Activated T-helper 2 cell treated with anti-CD3 and anti-CD28 coated beads, Interferon-gamma antibody, Interleukin-2, Interleukin-4, amounts not matched to agents 10 μg/mL and 5 μg/mL and 100 μg/mL, durations not matched to agents 14 hours and 24 hours and 36 hours (primary cell): ENCODE measurements at regions of chr16 and their contacts with region 1.

Region 1: GRCh38 chr16:46789499-46790414 is 41.2 kb downstream of the C16orf87 start:
- DNase-seq: peak; percentile 77
- H3K4me3 Mint-ChIP-seq: peak overlapping the region; percentile 80
- H3K27ac Mint-ChIP-seq: peak overlapping the region; percentile 52
- H3K4me1 Mint-ChIP-seq: peaks cover 22% of the 10 kb centered on the region
- H3K27me3 Mint-ChIP-seq: no peaks in the 10 kb centered on the region

Region 2: GRCh38 chr16:46801428-46802049 is 11.8 kb after region 1 on chr16:
- intact Hi-C with region 1: loop called (anchors 1 kb)
- DNase-seq: no peak
- H3K4me3 Mint-ChIP-seq: no peak overlapping the region
- H3K27ac Mint-ChIP-seq: no peak overlapping the region
- H3K4me1 Mint-ChIP-seq: peaks cover 19% of the 10 kb centered on the region
- H3K27me3 Mint-ChIP-seq: no peaks in the 10 kb centered on the region

Region 3: DNA sequence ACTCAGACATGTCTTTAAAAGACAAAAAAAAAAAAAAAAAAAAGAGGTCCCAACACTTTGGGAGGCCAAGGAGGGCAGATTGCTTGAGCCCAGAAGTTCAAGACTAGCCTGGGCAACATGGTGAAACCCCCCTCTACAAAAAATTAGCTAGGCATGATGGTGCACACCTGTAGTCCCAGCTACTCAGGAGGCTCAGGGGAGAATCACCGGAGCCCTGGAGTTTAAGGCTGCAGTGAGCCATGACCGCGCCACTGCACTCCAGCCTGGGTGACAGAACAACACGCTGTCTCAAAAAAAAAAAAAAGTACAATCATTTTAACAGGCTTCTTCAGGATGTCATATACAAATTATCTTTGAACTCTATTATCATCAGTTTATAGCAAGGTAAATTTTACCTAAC is 19.2 kb after region 1 on chr16:
- intact Hi-C with region 1: loop called (anchors 2 kb)
- DNase-seq: no peak
- H3K4me3 Mint-ChIP-seq: no peak overlapping the region
- H3K27ac Mint-ChIP-seq: no peak overlapping the region
- H3K4me1 Mint-ChIP-seq: peaks cover 32% of the 10 kb centered on the region
- H3K27me3 Mint-ChIP-seq: no peaks in the 10 kb centered on the region

Region 4: GRCh38 chr16:46830902-46831647 is 41.3 kb after region 1 on chr16 and contains the start of gene C16orf87:
- intact Hi-C with region 1: loop called (anchors 1 kb)
- DNase-seq: peak; percentile 89
- H3K4me3 Mint-ChIP-seq: peak within 1 kb of the TSS; percentile 98
- H3K27ac Mint-ChIP-seq: peak within 1 kb of the TSS; percentile 99
- H3K4me1 Mint-ChIP-seq: peaks cover 31% of the 10 kb centered on the region
- H3K27me3 Mint-ChIP-seq: peaks cover 11% of the 10 kb centered on the region
- total RNA-seq, gene C16orf87: 20.1 and 24.0 TPM in 2 replicates

Region 5: GRCh38 chr16:46883690-46884512 is 94.1 kb after region 1 on chr16 and contains the start of gene GPT2:
- intact Hi-C with region 1: loop called (anchors 5 kb)
- DNase-seq: peak; percentile 80
- H3K4me3 Mint-ChIP-seq: peak within 1 kb of the TSS; percentile 84
- H3K27ac Mint-ChIP-seq: peak within 1 kb of the TSS; percentile 77
- H3K4me1 Mint-ChIP-seq: peaks cover 12% of the 10 kb centered on the region
- H3K27me3 Mint-ChIP-seq: peaks cover 21% of the 10 kb centered on the region
- total RNA-seq, gene GPT2: 12.9 and 13.5 TPM in 2 replicates